ENCODE measurements at regions of chr16 and their contacts with region 1.

Region 1: GRCh38 chr16:88686439-88687253 is at the start of gene SNAI3:
- DNase-seq: peak; percentile 76
- ATAC-seq: peak; percentile 90
- H3K4me3 ChIP-seq: peak within 1 kb of the TSS; percentile 72
- H3K27ac ChIP-seq: no peak within 1 kb of the TSS
- H3K4me1 ChIP-seq: 0 out of 2 replicates have a peak, but pooled peaks cover 3% of the 10 kb centered on the region
- H3K27me3 ChIP-seq: no peaks in the 10 kb centered on the region
- CTCF ChIP-seq: no peak
- total RNA-seq, gene SNAI3: 0.22 and 0.46 TPM in 2 replicates

Region 2: DNA sequence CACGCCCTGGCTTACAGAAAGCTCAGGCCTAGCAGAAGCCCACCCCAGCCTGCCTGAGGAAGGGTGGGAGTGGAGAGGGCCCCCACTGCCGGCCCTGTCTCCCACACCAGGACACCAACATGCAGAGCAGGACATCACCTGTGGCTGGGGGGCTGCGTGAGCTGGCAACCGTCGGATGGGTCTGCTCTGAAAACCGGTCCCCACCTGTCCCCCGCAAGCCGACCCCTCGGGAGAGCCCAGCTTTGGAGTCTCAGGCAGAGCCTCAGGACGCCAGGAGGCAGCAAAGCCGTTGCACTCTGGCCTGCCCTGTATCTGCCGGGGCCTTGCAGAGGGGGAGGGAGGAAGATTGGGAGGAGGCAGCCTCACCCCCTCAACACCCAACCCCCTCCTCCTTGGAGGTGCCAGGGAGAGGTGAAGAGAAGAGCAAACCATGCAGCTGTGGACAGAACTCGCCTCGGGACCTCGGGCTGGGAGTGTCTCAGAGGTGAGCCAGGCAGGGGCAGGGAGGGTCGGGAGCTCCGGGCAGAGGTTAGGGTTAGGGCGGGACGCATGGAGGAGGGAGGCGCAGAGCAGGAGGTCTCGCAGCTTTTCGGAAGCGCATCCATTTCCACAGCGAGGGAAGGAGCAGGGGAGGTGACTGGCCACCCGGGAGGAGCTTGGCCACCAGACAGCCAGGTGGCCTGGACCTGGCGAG is 146.8 kb before region 1 on chr16:
- CTCF ChIA-PET with region 1: no interaction called
- POLR2A ChIA-PET with region 1: no interaction called
- intact Hi-C with region 1: no loop called
- DNase-seq: no peak
- ATAC-seq: peak; percentile 54
- H3K4me3 ChIP-seq: no peak overlapping the region
- H3K27ac ChIP-seq: no peak overlapping the region
- H3K4me1 ChIP-seq: 0 out of 2 replicates have a peak, but pooled peaks cover 6% of the 10 kb centered on the region
- H3K27me3 ChIP-seq: peaks cover 10% of the 10 kb centered on the region
- CTCF ChIP-seq: 0 out of 2 replicates have a peak, but pooled peaks have one; percentile 9

Region 3: GRCh38 chr16:88662843-88663606 is 23.6 kb before region 1 on chr16 and contains the start of gene MVD:
- CTCF ChIA-PET with region 1: no interaction called
- POLR2A ChIA-PET with region 1: no interaction called
- intact Hi-C with region 1: loop called (anchors 1 kb)
- DNase-seq: peak; percentile 94
- ATAC-seq: peak; percentile 99
- H3K4me3 ChIP-seq: peak within 1 kb of the TSS; percentile 88
- H3K27ac ChIP-seq: peak within 1 kb of the TSS; percentile 70
- H3K4me1 ChIP-seq: no peaks in the 10 kb centered on the region; the same call in 1 of the 2 replicates
- H3K27me3 ChIP-seq: no peaks in the 10 kb centered on the region
- CTCF ChIP-seq: 0 out of 2 replicates have a peak, but pooled peaks have one; percentile 10
- total RNA-seq, gene MVD: 38.3 and 48.9 TPM in 2 replicates

Region 4: GRCh38 chr16:88803264-88803987 is 116.8 kb after region 1 on chr16 and contains the start of gene CDT1:
- CTCF ChIA-PET with region 1: no interaction called
- POLR2A ChIA-PET with region 1: no interaction called
- intact Hi-C with region 1: no loop called
- DNase-seq: peak; percentile 77
- ATAC-seq: peak; percentile 31
- H3K4me3 ChIP-seq: peak within 1 kb of the TSS; percentile 82
- H3K27ac ChIP-seq: peak within 1 kb of the TSS; percentile 20; the same call in 1 of the 2 replicates
- H3K4me1 ChIP-seq: peaks cover 7% of the 10 kb centered on the region; the same call in 1 of the 2 replicates
- H3K27me3 ChIP-seq: no peaks in the 10 kb centered on the region
- CTCF ChIP-seq: no peak
- total RNA-seq, gene CDT1: 43.0 and 76.6 TPM in 2 replicates

Measured in PC-3 (cell line).